Pancreas (tissue), 10 donors: ENCODE measurements at regions of chr1 and their contacts with region 1.

Region 1: DNA sequence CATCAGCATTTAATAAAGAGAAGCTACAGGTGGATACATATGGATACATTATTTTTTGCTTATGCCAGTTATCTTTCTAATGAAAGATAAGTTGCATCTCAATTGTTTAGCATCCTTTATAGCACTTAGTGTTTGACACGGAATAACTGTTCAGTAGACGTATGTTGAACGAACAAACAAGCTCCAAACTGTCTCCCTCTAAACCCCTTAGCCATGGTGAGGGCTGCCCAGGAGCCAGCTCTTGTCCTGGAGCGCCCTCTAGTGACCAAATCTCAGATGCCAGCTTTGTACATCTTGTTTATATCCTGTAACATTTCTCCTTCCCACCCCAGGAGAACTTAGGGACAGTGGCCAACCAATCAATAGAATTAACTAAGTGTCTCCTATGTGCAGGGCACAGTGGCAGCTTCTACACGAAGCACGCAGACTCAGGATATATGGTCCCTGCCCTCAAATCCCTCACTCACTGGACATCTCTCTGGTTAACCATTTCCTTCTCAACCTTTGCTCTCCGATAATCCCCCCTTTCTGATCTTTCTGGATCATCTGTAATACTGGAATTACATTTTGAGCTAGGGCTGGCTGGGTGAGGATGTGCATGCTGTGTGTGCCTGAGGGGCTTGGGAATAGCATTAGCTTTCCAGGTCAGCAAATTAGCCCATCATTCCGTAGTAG is 22.9 kb downstream of the KCNA10 start:
- DNase-seq: peak in 5 of 6 donors; percentile 69 to 86 (median 85)
- ATAC-seq: peak; percentile 89 to 97 (median 92)
- H3K4me3 ChIP-seq: no peak overlapping the region
- H3K27ac ChIP-seq: no peak overlapping the region
- H3K4me1 ChIP-seq: no peaks in the 10 kb centered on the region
- H3K27me3 ChIP-seq: no peaks in the 10 kb centered on the region
- CTCF ChIP-seq: peak; percentile 74 to 91 (median 86)

Region 2: DNA sequence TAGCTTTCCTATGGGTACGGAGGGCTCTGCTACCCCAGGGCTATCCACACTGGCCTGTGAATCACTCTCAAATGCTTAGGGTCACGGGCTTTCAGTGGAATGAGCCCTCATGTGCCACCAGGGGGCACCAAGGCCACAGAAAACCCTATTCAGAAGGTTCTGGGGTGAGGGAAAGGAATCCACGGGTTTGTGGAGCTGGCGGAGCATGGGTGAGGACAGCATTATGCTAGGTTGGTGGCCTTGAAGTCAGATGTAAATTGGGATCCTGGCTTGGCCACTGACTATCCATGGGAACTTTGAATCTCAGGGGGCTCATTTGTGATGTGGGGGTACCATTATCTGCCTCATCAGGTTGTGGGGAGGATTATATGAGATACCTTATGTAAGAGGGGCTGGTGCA is 83.5 kb before region 1 on chr1:
- intact Hi-C with region 1: loop called in 1 of 3 experiments (anchors 5 kb)
- DNase-seq: peak in 5 of 6 donors; percentile 28 to 70 (median 57)
- ATAC-seq: peak; percentile 35 to 72 (median 62)
- H3K4me3 ChIP-seq: no peak overlapping the region
- H3K27ac ChIP-seq: no peak overlapping the region
- H3K4me1 ChIP-seq: peaks cover 0 to 5% (median 0%) of the 10 kb centered on the region in 3 donors
- H3K27me3 ChIP-seq: no peaks in the 10 kb centered on the region
- CTCF ChIP-seq: peak; percentile 33 to 57 (median 47)